Stomach (tissue), 19 donors: ENCODE measurements at regions of chr5 and their contacts with region 1.

Region 1: GRCh38 chr5:96595300-96596090 is 66.7 kb upstream of the CAST start:
- DNase-seq: no peak
- H3K4me3 ChIP-seq: no peak overlapping the region
- H3K27ac ChIP-seq: no peak overlapping the region
- H3K4me1 ChIP-seq: no peaks in the 10 kb centered on the region
- H3K27me3 ChIP-seq: no peaks in the 10 kb centered on the region
- CTCF ChIP-seq: peak in 3 of 7 experiments; percentile 11 to 26 (median 20)
- EP300 ChIP-seq: no peak
- POLR2A ChIP-seq: no peak

Region 2: DNA sequence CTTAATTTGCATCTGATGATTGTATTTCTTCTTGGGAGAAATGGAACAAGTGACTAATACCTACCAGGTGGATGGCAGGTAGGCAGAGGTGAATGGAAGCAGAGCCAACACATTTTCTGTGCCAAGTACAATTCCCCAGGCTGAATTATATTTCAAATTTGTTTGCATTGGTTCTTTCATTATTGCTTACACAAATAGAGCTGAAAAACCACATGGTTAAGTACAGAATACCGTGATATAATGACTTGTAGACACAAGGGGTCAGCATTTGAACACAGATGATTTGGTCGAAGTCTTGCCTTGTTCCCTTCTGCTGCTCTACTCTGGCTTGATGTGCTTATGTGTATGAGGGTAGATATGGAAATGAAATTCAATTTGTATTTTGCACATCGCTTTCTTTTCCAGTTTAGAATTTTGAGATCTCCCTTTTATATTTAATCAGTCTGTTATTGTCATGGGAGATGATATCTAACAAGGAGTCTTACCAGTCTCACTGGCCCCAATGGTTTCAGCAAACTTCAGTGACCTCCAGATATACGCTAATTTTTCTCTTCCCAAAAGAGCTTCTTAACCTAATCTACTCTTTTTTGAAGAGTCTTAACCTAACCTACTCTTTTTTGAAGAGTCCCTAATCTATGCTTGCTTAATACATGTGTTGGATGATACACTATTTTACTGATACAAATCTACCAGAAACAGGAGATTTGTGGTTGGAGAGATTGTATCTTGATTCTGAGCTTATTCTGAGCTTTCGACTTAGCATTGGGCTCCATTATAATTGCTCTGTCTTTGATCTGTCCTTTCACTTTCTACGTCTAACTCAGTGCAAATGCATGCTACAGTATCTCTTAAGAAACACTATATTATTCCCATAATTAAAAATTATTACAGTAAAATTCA is 250.6 kb before region 1 on chr5:
- intact Hi-C with region 1: loop called (anchors 5 kb)
- DNase-seq: peak; percentile 73 to 87
- H3K4me3 ChIP-seq: no peak overlapping the region
- H3K27ac ChIP-seq: peak overlapping the region in 3 of 5 donors; percentile 7 to 64 (median 54)
- H3K4me1 ChIP-seq: peaks cover 4 to 32% (median 6%) of the 10 kb centered on the region in 4 donors
- H3K27me3 ChIP-seq: no peaks in the 10 kb centered on the region
- CTCF ChIP-seq: peak in 4 of 7 experiments; percentile 21 to 80 (median 59)
- EP300 ChIP-seq: no peak
- POLR2A ChIP-seq: no peak

Region 3: GRCh38 chr5:97094579-97095317 is 499.3 kb after region 1 on chr5:
- intact Hi-C with region 1: no loop called
- DNase-seq: no peak
- H3K4me3 ChIP-seq: no peak overlapping the region
- H3K27ac ChIP-seq: no peak overlapping the region
- H3K4me1 ChIP-seq: peaks cover 0 to 8% (median 4%) of the 10 kb centered on the region in 4 donors
- H3K27me3 ChIP-seq: no peaks in the 10 kb centered on the region
- CTCF ChIP-seq: no peak
- EP300 ChIP-seq: no peak
- POLR2A ChIP-seq: no peak